Dendritic cell treated with granulocyte-macrophage colony-stimulating factor and Interleukin-4, amounts not matched to agents 40 ng/mL and 50 ng/mL, for 4 days (primary cell): ENCODE measurements at regions of chr1 and their contacts with region 1.

Region 1: DNA sequence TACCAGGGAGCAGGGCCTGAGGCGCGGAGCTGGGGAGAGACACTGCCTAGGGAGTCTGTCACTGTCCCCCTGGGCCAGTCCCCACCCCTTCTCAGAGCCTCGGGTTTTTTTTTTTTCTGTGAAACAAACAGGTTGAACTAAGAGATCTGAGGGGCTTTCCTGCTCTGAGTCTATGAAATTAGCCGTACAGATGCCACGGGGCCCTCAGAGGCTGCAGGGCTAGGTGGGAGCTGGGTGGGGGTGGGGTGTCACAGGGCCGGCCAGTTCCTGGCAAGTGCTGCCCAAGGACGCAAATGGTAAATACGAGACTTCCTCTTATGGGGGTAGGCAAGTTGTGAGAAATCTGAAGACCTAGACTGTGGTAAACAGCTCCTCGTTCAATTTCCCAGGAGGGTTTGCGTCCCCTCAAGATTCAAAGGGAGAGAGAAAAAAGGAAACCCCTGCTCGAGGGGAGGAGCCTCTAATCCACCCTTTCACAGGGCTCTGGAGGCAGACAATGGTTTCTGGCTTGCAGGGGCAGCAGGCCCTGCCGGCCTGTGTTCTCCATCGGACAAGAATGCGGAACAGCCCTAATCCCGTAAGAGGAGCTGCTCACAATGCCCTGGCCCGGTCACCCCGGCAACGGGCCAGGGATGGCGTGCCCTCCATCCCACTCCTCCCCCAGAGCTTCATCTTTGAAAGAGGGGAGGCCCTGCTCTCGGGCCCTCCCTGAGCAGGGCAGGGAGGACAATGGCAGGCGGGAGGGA is 7.8 kb downstream of the NUAK2 start:
- H3K4me3 Mint-ChIP-seq: peak overlapping the region; percentile 56
- H3K27ac Mint-ChIP-seq: peak overlapping the region; percentile 93
- H3K4me1 Mint-ChIP-seq: peaks cover 77% of the 10 kb centered on the region
- H3K27me3 Mint-ChIP-seq: no peaks in the 10 kb centered on the region

Region 2: DNA sequence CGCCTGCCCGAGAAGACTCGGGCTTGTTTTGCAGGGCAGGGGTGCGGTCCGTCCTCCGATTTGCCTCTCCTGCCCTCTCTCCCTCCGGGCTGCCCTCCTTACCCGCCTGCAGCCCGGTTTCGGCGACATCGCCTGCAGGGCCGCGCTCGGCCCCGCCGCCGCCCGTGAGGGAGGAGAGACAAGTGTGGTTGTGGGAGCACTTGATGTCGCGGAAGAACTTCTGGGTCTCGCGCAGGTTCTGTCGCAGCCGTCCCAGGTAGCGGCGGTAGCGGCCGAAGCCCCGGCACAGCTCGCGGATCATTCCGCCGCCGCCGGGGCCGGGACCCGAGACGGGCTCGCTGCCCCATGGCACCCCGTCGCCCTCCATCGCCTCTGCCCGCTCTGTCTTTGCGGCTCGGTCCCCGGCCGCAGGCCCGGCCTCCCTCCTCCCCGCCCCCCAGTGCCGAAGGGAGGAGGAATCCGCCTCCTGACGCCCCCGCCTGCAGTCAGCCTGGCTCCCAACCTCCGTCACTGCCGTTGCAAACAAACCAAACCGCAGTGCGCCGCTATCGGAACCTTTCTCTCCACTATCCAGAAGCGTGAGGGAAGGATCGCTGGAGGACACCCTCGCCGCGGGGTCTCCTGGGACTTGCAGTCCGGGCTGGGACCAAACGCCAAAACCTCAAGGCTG is 102.4 kb before region 1 on chr1 and contains the start of gene DSTYK:
- intact Hi-C with region 1: loop called (anchors 5 kb)
- H3K4me3 Mint-ChIP-seq: peak within 1 kb of the TSS; percentile 91
- H3K27ac Mint-ChIP-seq: peak within 1 kb of the TSS; percentile 96
- H3K4me1 Mint-ChIP-seq: peaks cover 51% of the 10 kb centered on the region
- H3K27me3 Mint-ChIP-seq: no peaks in the 10 kb centered on the region

Region 3: GRCh38 chr1:205440476-205441317 is 127.0 kb after region 1 on chr1:
- intact Hi-C with region 1: no loop called
- H3K4me3 Mint-ChIP-seq: peak overlapping the region; percentile 67
- H3K27ac Mint-ChIP-seq: no peak overlapping the region
- H3K4me1 Mint-ChIP-seq: peaks cover 44% of the 10 kb centered on the region
- H3K27me3 Mint-ChIP-seq: peaks cover 79% of the 10 kb centered on the region